ENCODE measurements at regions of chr1 and their contacts with region 1.

Region 1: GRCh38 chr1:160193091-160193819 is 2.9 kb downstream of the CASQ1 start:
- DNase-seq: peak; percentile 78
- H3K4me3 ChIP-seq: no peak overlapping the region
- H3K27ac ChIP-seq: no peak overlapping the region
- H3K27me3 ChIP-seq: peaks cover 8% of the 10 kb centered on the region
- CTCF ChIP-seq: peak; percentile 99

Region 2: GRCh38 chr1:160108888-160109662 is 84.2 kb before region 1 on chr1:
- CTCF ChIA-PET with region 1: interaction called, 67 read pairs
- POLR2A ChIA-PET with region 1: no interaction called
- DNase-seq: no peak
- H3K4me3 ChIP-seq: no peak overlapping the region
- H3K27ac ChIP-seq: no peak overlapping the region
- H3K27me3 ChIP-seq: peaks cover 16% of the 10 kb centered on the region
- CTCF ChIP-seq: peak; percentile 55

Region 3: DNA sequence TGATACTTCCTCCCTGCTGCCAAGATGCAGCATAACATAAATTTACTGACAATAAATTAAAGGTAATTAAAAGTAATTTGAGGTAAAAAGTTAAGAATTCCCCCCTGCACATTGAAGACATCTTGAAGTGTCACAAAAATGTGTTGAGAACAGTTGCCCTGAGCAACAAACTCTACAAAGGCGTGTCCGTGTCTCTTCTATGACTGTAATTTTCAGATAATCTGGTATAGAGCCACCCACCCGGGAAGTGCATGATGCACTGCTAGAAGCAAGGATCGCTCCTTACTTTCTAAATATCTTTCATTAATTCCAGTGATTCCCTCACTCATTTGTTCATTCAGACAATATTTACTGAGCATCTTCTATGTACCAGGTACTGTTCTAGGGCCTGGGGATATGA is 13.9 kb before region 1 on chr1:
- CTCF ChIA-PET with region 1: interaction called, 27 read pairs
- POLR2A ChIA-PET with region 1: no interaction called
- DNase-seq: no peak
- H3K4me3 ChIP-seq: no peak overlapping the region
- H3K27ac ChIP-seq: no peak overlapping the region
- H3K27me3 ChIP-seq: peaks cover 7% of the 10 kb centered on the region
- CTCF ChIP-seq: no peak

Region 4: DNA sequence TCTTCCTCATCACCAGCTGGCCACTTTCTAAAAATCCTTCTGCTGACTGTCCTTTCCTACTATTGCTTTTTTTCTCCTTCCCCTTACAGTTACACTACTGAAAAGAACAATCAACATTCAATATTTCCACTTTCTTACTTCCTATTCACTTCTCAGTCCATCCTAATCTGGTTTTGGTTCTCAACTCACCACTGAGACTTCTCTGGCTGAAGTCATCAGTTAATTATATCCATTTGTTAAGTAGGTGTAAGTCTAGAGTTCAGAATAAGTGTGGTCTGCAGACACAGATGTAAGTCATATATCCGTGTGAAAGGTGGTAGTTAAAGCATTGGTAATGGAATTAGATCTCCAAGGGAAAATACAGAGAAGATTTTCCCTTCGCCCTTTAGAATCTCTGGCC is 33.4 kb after region 1 on chr1:
- CTCF ChIA-PET with region 1: interaction called, 258 read pairs
- POLR2A ChIA-PET with region 1: no interaction called
- DNase-seq: no peak
- H3K4me3 ChIP-seq: no peak overlapping the region
- H3K27ac ChIP-seq: no peak overlapping the region
- H3K27me3 ChIP-seq: no peaks in the 10 kb centered on the region
- CTCF ChIP-seq: no peak

Region 5: DNA sequence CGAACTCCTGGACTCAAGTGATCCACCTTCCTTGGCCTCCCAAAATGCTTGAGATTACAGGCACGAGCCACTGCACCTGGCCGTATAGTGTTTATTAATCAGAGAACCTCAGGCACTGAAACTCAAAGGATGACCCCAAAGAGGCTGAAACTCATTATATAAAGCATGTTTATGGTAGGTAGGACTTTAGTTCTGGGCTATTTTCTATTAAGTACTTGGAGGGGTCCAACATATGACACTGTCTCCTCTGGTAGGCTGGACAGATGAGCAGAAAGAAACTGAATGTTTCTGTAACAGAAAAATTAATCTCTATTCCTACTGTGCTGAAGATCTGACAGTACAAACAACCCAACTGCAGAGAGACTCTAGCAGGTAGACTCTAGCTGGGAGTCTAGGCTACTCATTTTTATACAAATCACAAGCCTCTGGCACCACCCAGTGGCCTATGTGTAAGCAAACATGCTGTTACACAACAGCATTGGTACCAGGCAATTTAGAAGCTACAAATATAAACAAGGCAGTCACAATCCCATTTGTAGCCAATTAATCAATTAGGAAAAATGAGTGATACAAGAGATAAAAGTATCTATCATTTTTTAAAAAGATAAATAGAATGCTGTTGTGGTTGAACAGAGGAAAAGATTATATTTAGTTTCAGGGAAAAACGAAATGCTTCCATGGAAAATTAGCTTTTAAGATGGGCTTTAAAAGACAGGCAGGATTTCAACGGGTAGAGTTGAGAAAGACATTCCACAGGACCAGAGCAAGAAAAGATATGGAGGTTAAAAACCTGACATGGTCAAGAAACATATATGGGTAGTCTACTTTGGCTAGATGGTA is 58.7 kb after region 1 on chr1:
- CTCF ChIA-PET with region 1: interaction called, 147 read pairs
- POLR2A ChIA-PET with region 1: interaction called, 3 read pairs
- DNase-seq: peak; percentile 49
- H3K4me3 ChIP-seq: no peak overlapping the region
- H3K27ac ChIP-seq: no peak overlapping the region
- H3K27me3 ChIP-seq: no peaks in the 10 kb centered on the region
- CTCF ChIP-seq: peak; percentile 76

Region 6: DNA sequence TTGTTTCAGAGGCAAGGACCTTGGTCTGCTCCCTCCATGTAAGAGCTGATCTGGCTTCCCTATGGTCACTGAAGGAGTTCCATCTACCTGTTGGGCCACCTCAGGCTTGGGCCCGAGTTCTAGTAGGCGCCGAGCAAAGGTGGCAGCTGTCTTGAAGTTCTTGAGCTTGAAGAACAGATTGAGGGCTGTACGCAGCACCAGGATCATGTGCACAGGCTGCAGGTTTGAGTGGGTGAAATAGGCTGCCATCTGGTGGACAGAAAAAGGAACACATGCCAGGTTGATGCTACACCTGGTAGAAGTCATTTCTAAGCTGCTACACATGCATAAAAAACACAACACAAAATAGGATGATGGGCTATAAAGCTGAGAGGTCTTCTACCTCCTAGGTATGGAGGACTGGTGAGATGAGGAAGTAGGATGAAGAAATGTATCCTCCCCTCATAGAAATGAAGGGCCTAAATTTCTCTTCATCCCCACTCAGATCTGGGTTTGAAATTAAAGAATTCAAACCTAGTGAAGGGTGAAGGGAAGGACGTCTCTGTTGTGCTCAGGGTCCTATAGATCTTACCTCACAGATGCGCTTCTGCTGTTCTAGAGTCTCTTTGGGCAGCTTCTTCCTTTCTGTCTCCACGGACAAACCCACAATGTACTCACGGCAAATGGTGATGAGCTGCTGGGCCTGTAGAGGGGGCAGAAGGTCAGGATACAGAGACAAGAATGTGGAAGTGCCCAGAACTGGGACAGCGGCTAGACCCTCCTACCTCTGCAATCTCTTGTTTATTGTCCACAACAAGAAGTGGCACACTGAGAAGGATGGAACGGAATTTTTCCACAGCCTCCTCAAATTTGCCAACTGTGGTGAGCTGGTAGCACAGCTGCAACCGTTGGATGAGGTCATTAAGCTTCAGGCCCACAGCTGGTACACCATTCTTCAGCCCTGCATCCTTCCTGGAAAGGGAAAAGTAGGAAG is 98.3 kb after region 1 on chr1:
- CTCF ChIA-PET with region 1: interaction called, 175 read pairs
- POLR2A ChIA-PET with region 1: interaction called, 5 read pairs
- DNase-seq: peak; percentile 32
- H3K4me3 ChIP-seq: no peak overlapping the region
- H3K27ac ChIP-seq: no peak overlapping the region
- H3K27me3 ChIP-seq: no peaks in the 10 kb centered on the region
- CTCF ChIP-seq: peak; percentile 82

Measured in AG04450 (cell line).